ENCODE measurements at regions of chr10 and their contacts with region 1.

Region 1: GRCh38 chr10:112137154-112137987 is 46.2 kb downstream of the GPAM start:
- DNase-seq: peak; percentile 59 to 97 (median 84)

Region 2: DNA sequence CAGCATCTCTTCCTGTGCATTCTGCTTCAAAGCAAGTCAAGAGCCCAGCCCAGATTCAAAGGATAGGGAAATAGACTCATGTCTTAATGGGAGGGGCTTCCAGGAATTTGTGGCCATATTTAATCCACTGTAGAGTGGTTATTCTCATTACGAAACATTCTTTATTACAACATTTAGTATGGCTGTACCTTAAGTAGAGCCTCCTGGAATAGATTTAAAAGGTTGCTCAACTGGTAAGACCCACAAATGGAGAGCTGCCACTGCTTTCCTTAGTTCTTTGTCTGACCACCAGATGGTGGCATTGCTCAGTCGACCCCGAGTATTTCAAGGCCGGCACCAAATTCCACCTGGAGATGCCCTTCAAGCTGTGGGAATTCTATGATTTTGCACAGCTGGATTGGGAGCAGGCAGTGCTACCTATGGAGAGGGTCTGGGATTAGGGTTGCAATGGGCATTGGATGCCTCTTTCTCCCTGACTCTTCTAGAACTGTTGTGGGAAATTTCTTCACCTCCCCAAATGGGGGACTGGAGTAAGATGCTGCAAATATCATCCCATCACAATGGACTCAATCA is 1391.0 kb before region 1 on chr10:
- intact Hi-C with region 1: loop called (anchors 10 kb)
- DNase-seq: peak; percentile 18 to 91 (median 60)

Region 3: DNA sequence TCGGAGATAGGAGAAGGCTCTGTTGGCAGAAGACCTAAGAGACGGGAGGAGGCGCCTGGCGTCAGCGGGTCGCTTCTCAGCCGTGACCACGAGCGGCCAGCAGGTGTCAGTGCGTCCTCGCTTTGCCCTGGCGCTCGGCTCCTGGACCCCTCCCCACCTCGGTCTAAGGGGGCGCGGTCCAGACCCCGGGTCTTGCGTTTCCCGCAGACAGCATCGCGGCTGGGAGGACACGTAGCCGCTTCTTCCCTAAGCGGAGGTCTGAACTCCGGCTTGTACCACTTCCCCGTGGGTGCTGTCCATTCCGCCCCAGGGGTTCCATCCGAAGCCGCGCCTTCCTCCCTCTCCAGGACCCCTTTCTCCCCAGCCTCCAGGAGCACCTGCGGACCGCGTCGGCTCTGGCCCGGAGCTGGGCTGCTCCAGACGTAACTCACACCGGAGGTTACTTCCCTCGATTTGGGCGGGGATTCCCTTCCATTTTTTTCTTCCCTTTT is 1061.1 kb before region 1 on chr10:
- intact Hi-C with region 1: loop called (anchors 1 kb)
- DNase-seq: peak; percentile 59 to 97 (median 72)

Region 4: DNA sequence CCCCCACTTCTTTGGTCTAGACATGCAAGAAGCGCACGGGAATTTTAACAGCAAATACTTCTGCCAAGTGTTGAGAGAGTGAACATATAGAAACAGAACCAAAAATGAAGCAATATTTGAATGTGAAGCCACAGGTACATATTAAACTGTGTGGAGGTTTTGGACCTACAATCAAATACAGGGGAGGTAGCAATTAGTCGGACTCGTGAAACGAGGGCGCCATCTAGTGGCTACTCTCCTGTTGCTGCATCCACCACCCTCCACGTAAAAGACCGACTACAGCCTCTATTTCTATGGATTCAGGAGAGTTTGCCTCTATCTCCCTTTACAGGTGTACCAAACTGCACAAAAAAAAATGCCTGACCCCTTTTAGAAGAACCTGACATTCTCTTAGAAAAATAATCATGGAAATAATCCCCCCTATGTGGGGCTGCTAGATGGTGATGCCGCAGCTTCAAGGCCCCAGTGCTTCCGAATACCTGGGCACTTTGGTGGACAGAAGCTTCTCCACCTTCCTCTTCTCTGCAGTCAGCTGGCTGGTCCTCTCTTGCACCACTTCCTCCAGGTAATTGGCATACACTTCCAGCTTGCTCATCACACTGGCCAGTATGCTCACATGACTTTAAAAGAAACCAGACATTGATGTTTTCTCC is 177.6 kb after region 1 on chr10:
- intact Hi-C with region 1: loop called (anchors 2 kb)
- DNase-seq: peak; percentile 64 to 96 (median 87)

Region 5: DNA sequence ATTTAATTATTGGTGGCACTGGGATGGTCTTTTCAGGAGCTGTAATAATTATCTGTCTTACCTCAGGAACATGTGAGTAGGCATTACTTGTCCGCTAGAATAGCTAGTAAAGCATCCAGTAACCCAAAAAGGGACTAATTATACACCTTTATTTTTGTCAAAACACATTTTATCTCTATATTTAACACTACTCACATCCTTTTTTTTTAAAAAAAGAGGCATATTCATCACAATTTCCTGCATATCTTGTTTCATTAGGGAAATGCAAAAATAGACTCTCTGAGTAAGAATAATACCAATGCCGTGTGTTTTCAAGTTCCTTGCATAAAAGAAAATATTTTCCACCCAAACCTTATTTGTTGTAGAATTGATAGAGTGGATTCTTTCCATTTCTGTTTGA is 409.1 kb after region 1 on chr10:
- intact Hi-C with region 1: no loop called
- DNase-seq: no peak